ENCODE measurements at regions of chr6 and their contacts with region 1.

Region 1: GRCh38 chr6:148947621-148948444 is 201.0 kb downstream of the UST start:
- DNase-seq: peak; percentile 87
- ATAC-seq: peak; percentile 92
- H3K4me3 Mint-ChIP-seq: no peak overlapping the region
- H3K27ac Mint-ChIP-seq: no peak overlapping the region
- H3K4me1 Mint-ChIP-seq: no peaks in the 10 kb centered on the region
- H3K27me3 Mint-ChIP-seq: peaks cover 2% of the 10 kb centered on the region
- CTCF ChIP-seq: peak; percentile 89

Region 2: GRCh38 chr6:148746363-148747144 is 201.3 kb before region 1 on chr6 and contains the start of gene UST:
- CTCF ChIA-PET with region 1: interaction called, 4 read pairs
- POLR2A ChIA-PET with region 1: interaction called, 3 read pairs
- intact Hi-C with region 1: loop called (anchors 1 kb)
- DNase-seq: peak; percentile 82
- ATAC-seq: peak; percentile 57
- H3K4me3 Mint-ChIP-seq: peak within 1 kb of the TSS; percentile 90
- H3K27ac Mint-ChIP-seq: peak within 1 kb of the TSS; percentile 65
- H3K4me1 Mint-ChIP-seq: peaks cover 22% of the 10 kb centered on the region
- H3K27me3 Mint-ChIP-seq: peaks cover 38% of the 10 kb centered on the region
- CTCF ChIP-seq: peak; percentile 31
- total RNA-seq, gene UST: 1.2 to 1.5 TPM

Measured in activated CD8-positive, alpha-beta T cell treated with anti-CD3 and anti-CD28 coated beads for 36 hours (primary cell).